AG04449 (cell line): ENCODE measurements at regions of chr3 and their contacts with region 1.

Region 1: DNA sequence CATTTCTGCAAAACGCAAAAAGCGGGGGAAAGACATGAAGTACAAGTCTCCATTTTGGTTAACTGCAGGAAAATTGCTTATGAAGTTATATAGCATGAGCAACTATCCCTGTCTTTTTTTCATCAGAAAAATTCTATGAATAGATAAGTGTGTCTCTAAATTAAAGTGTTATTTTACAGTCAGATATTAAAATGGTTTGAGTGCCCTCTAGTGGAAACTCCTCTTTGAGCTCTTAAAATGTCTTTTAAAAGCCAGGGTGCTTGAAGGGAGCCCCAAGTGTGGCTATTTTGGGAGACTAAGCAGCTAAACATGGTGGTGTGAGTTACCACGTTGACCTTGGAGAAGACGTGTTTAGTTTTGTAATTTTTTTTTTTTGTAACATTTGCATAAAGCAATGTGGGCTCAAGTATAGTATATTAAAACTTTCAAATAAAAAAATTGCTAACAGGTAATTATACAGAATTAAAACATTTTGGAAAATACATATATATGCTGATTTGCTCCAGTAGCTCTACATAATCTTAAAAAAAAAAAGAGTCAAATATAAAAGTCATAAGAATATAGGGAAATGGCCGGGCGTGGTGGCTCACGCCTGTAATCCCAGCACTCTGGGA is 77.2 kb downstream of the PPP2R3A start:
- DNase-seq: no peak
- H3K4me3 ChIP-seq: no peak overlapping the region
- CTCF ChIP-seq: peak; percentile 7

Region 2: GRCh38 chr3:135905058-135905724 is 137.5 kb before region 1 on chr3:
- CTCF ChIA-PET with region 1: interaction called, 195 read pairs
- POLR2A ChIA-PET with region 1: no interaction called
- DNase-seq: no peak
- H3K4me3 ChIP-seq: no peak overlapping the region
- CTCF ChIP-seq: peak; percentile 18

Region 3: DNA sequence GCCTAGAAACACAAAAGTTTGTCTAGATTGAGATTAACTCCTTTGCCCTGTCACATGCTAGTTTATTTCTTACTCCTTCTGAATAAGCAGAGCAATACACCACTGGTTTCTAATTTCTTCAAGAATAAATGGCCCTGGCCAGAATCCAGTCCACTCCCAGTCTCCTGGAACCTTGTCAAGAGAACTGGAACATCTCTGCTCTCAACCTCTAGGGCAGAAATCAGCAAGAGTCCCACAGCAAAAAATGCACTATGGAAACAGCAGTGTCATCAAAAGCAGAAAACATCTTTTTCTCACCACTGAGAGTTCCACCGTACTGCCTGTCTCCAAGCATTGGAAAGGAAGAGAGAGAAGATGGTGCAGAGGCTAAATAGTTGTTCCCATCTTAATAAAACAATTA is 113.0 kb before region 1 on chr3:
- CTCF ChIA-PET with region 1: interaction called, 531 read pairs
- POLR2A ChIA-PET with region 1: no interaction called
- DNase-seq: no peak
- H3K4me3 ChIP-seq: no peak overlapping the region
- CTCF ChIP-seq: no peak

Region 4: DNA sequence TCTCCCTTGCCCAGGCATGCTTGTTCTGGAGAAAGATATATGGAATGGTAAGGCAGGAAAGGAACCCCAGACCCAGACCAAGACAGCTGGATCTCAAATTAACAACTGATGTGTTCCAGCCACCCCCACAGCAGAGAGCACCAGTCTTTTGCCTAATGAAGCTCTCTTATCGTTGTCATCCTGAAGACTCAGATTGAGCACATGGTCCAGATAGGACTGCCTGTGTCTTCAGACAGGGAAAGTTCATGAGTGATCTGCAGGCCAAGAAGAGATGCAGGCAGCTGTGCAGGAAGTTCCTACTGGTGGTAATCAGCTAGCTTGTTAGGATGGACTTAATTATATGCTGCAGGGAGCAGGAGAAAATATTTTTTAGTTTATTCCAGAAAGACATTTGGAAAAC is 23.8 kb before region 1 on chr3:
- CTCF ChIA-PET with region 1: interaction called, 18 read pairs
- POLR2A ChIA-PET with region 1: no interaction called
- DNase-seq: no peak
- H3K4me3 ChIP-seq: no peak overlapping the region
- CTCF ChIP-seq: no peak